ENCODE measurements at regions of chr4 and their contacts with region 1.

Region 1: GRCh38 chr4:121307445-121308327 is 73.1 kb downstream of the QRFPR start:
- DNase-seq: peak; percentile 84
- H3K4me3 Mint-ChIP-seq: no peak overlapping the region
- H3K27ac Mint-ChIP-seq: no peak overlapping the region
- H3K4me1 Mint-ChIP-seq: peaks cover 13% of the 10 kb centered on the region
- H3K27me3 Mint-ChIP-seq: peaks cover 17% of the 10 kb centered on the region

Region 2: GRCh38 chr4:120156120-120156718 is 1151.5 kb before region 1 on chr4:
- intact Hi-C with region 1: loop called (anchors 2 kb)
- DNase-seq: peak; percentile 81
- H3K4me3 Mint-ChIP-seq: no peak overlapping the region
- H3K27ac Mint-ChIP-seq: no peak overlapping the region
- H3K4me1 Mint-ChIP-seq: no peaks in the 10 kb centered on the region
- H3K27me3 Mint-ChIP-seq: peaks cover 8% of the 10 kb centered on the region

Region 3: DNA sequence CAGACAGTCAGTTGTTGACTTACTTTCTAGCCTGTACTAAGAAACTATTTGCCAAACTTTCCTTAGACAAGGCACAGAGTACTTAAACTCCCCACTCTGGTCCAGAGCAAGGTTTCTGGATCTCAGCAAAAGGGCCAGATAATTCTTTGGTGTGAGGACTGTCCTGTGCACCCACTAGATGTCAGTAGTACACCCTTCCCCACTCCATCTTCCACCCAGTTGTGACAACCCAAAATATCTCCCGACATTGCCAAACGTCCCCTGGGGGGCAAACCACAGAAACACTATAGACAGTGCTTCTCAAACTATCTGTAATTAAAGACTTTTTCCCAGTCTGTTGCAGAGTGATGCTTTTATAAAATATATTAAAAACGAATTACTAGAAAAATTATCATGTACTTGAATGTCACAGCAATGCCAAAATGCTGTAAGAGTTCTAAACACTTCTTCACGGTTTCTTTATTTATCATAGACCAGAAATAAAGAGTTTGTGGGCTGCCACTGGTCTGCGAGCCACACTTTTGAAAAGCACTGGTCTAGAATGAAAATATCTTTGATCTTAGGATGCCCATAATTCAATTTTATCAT is 588.6 kb before region 1 on chr4:
- intact Hi-C with region 1: loop called (anchors 2 kb)
- DNase-seq: peak; percentile 62
- H3K4me3 Mint-ChIP-seq: no peak overlapping the region
- H3K27ac Mint-ChIP-seq: no peak overlapping the region
- H3K4me1 Mint-ChIP-seq: no peaks in the 10 kb centered on the region
- H3K27me3 Mint-ChIP-seq: peaks cover 15% of the 10 kb centered on the region

Region 4: GRCh38 chr4:121126449-121127006 is 181.2 kb before region 1 on chr4:
- intact Hi-C with region 1: no loop called
- DNase-seq: no peak
- H3K4me3 Mint-ChIP-seq: no peak overlapping the region
- H3K27ac Mint-ChIP-seq: no peak overlapping the region
- H3K4me1 Mint-ChIP-seq: peaks cover 27% of the 10 kb centered on the region
- H3K27me3 Mint-ChIP-seq: no peaks in the 10 kb centered on the region

Region 5: GRCh38 chr4:122555216-122555615 is 1247.5 kb after region 1 on chr4:
- intact Hi-C with region 1: no loop called
- DNase-seq: no peak
- H3K4me3 Mint-ChIP-seq: no peak overlapping the region
- H3K27ac Mint-ChIP-seq: peak overlapping the region; percentile 56
- H3K4me1 Mint-ChIP-seq: peaks cover 51% of the 10 kb centered on the region
- H3K27me3 Mint-ChIP-seq: no peaks in the 10 kb centered on the region